ENCODE measurements at regions of chr10 and their contacts with region 1.

Region 1: DNA sequence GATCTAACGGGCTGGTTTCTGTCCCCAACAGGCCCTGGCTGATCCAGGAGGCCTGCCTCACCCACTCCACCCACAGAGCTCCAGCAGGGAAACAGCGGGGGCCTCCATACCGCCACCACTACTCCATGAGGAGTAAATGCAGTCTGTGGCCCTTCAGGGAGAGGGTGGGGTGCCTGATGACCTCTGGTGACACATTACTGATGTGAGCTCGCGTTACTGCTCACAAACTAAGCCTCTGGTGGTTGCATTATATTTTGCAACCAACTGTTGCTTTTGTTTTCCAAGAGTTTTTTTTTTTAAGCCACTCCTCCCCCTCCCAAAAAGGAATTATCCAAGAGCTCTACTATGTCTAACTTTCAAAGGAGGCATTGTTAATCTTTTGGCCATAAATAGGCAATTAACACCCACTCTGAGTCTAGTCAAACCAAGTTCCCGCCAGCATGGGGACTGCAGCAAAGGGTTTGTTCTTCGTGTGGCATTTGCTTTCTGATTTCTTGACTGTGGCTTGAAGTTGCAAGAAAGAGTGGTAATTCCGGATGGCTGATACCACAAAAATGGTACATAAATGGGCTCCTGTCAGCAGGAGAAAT is 72.6 kb downstream of the FAM53B start:
- DNase-seq: peak in 5 of 9 donors; percentile 31 to 60 (median 48)
- ATAC-seq: peak; percentile 71
- H3K4me3 ChIP-seq: peak overlapping the region; percentile 34
- H3K4me3 Mint-ChIP-seq: peak overlapping the region in 9 of 10 donors; percentile 55 to 93 (median 73)
- H3K27ac ChIP-seq: peak overlapping the region; percentile 19
- H3K27ac Mint-ChIP-seq: peak overlapping the region; percentile 23 to 93 (median 89)
- H3K4me1 ChIP-seq: peaks cover 83 to 97% of the 10 kb centered on the region in 2 donors
- H3K4me1 Mint-ChIP-seq: peaks cover 40 to 92% (median 82%) of the 10 kb centered on the region in 7 donors
- H3K27me3 ChIP-seq: no peaks in the 10 kb centered on the region
- H3K27me3 Mint-ChIP-seq: no peaks in the 10 kb centered on the region

Region 2: DNA sequence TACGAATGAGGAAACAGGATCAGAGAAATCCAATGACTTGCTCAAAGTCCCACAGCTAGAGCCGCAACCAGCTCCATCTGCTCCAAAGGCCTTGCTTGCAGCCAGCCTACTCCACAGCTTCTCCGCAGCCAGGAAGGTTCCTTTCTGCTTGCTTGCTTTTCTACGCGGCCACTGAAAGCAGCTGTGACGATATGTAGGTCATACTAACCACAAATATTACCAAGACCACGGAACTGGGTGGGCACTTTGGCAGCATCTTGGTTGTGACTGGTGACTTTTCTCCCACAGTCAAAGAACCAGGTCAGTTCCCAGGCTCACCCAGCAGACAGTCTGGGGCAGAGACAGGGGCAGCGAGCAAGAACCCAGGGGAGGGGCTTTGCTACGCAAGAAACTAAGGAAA is 13.8 kb before region 1 on chr10:
- CTCF ChIA-PET with region 1: interaction called, 6 read pairs
- POLR2A ChIA-PET with region 1: interaction called, 74 read pairs
- intact Hi-C with region 1: loop called in 1 of 2 experiments (anchors 1 kb)
- DNase-seq: no peak
- ATAC-seq: peak; percentile 66
- H3K4me3 ChIP-seq: peak overlapping the region; percentile 29
- H3K4me3 Mint-ChIP-seq: peak overlapping the region in 7 of 10 donors; percentile 4 to 52 (median 28)
- H3K27ac ChIP-seq: no peak overlapping the region
- H3K27ac Mint-ChIP-seq: peak overlapping the region in 7 of 9 donors; percentile 33 to 80 (median 69)
- H3K4me1 ChIP-seq: peaks cover 45 to 84% of the 10 kb centered on the region in 2 donors
- H3K4me1 Mint-ChIP-seq: peaks cover 47 to 84% (median 72%) of the 10 kb centered on the region in 7 donors
- H3K27me3 ChIP-seq: no peaks in the 10 kb centered on the region
- H3K27me3 Mint-ChIP-seq: no peaks in the 10 kb centered on the region